GM13976 (cell line): ENCODE measurements at regions of chr15 and their contacts with region 1.

Region 1: GRCh38 chr15:76190834-76191538 is 120.3 kb downstream of the ETFA start:
- DNase-seq: peak; percentile 93
- CTCF ChIP-seq: peak; percentile 86

Region 2: GRCh38 chr15:76791511-76791910 is 600.5 kb after region 1 on chr15:
- in situ Hi-C with region 1: no loop called
- DNase-seq: no peak
- CTCF ChIP-seq: no peak

Region 3: GRCh38 chr15:76866716-76867321 is 675.8 kb after region 1 on chr15:
- in situ Hi-C with region 1: loop called (anchors 25 kb)
- DNase-seq: peak; percentile 26
- CTCF ChIP-seq: peak; percentile 23